HCT116 (cell line): ENCODE measurements at regions of chr1 and their contacts with region 1.

Region 1: GRCh38 chr1:162040681-162041080 is 17.0 kb upstream of the OLFML2B start:
- DNase-seq: peak; percentile 34
- ATAC-seq: peak; percentile 68
- H3K4me3 ChIP-seq: no peak overlapping the region
- H3K27ac ChIP-seq: no peak overlapping the region
- H3K4me1 ChIP-seq: peaks cover 6 to 16% of the 10 kb centered on the region in 2 experiments
- H3K27me3 ChIP-seq: no peaks in the 10 kb centered on the region
- CTCF ChIP-seq: peak; percentile 50 to 72 (median 67); a peak in 5 of 6 replicates
- POLR2A ChIP-seq: no peak
- RAD21 ChIP-seq: peak; percentile 39

Region 2: DNA sequence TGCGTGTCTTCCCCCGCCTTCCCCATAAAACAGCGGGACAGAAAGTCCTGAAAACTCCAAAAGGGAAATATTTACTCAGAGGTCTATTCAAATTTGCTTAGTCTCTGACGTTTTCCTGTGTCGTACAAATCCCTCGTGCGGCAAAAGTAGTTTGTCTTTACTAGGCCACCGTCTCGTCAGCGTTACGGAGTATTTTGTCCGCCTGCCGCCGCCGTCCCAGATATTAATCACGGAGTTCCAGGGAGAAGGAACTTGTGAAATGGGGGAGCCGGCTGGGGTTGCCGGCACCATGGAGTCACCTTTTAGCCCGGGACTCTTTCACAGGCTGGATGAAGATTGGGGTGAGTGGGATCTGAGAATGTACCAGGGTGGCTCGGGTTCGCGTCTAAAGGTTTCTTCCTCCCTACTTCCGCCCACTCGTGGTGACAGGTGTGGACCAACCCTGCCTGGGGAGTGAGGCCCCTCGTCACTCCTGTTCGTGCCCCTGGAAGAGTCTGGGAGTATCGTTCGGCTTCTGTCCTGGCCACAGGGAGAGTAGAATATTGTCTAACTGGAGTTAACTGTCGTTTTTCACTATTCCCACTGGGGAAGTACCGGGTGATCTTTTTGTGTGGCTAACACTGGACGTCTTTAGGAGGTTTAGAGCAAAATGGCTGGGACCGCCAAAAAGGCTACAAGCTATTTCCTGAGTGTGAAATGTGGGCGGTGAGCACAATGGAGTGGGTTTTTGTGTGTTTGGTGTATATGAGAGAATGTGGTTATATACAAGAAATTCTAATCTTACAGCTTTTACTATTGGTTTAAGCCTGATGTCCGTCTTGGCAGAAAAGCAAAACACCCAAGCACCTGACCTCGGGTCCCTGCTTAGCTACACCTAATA is 274.3 kb before region 1 on chr1 and contains the start of gene ATF6:
- CTCF ChIA-PET with region 1: interaction called, 31 read pairs
- POLR2A ChIA-PET with region 1: interaction called, 4 read pairs
- RAD21 ChIA-PET with region 1: interaction called in 1 of 2 experiments, 5 read pairs
- intact Hi-C with region 1: loop called (anchors 1 kb)
- DNase-seq: peak; percentile 92
- ATAC-seq: peak; percentile 61
- H3K4me3 ChIP-seq: peak within 1 kb of the TSS; percentile 63 to 97
- H3K27ac ChIP-seq: peak within 1 kb of the TSS; percentile 46
- H3K4me1 ChIP-seq: peaks cover 13 to 31% of the 10 kb centered on the region in 2 experiments; a peak in 3 of 4 replicates
- H3K27me3 ChIP-seq: no peaks in the 10 kb centered on the region
- CTCF ChIP-seq: no peak
- POLR2A ChIP-seq: no peak
- RAD21 ChIP-seq: no peak
- total RNA-seq, gene ATF6: 20.9 TPM